Posterior vena cava (tissue), 2 donors: ENCODE measurements at regions of chr20 and their contacts with region 1.

Region 1: DNA sequence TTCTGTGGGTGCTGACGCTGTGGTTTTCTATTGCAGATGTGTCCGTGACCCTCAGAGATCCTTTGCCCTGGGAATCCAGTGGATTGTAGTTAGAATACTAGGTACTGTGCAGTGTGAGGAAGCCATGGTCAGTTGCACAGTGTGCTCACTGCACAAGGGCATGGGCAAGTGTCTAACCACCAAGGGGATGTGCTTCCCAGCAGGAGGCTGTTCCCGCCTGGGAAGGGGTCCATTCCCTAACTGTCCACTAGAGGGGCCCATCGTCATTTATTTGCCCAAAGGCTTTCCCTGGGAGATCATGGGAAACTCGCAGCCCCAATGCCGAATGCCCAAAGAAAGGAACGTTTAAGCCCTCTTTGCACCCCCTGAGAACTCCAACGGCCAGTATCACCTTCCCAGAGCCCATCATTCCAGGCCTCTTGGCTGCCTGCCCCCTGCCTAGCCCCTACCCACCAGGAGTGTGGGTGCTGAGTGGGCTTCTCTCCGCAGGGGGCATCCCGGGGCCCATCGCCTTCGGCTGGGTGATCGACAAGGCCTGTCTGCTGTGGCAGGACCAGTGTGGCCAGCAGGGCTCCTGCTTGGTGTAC is 26.2 kb downstream of the SLCO4A1 start:
- DNase-seq: no peak

Region 2: GRCh38 chr20:62793912-62794724 is 125.6 kb after region 1 on chr20:
- intact Hi-C with region 1: loop called (anchors 5 kb)
- DNase-seq: peak; percentile 99

Region 3: GRCh38 chr20:62808211-62808865 is 139.8 kb after region 1 on chr20:
- intact Hi-C with region 1: loop called (anchors 5 to 10 kb)
- DNase-seq: peak; percentile 92

Region 4: GRCh38 chr20:62818592-62819493 is 150.3 kb after region 1 on chr20:
- intact Hi-C with region 1: loop called in 1 of 2 experiments (anchors 10 kb)
- DNase-seq: no peak

Region 5: GRCh38 chr20:62846188-62846890 is 177.8 kb after region 1 on chr20:
- intact Hi-C with region 1: loop called in 1 of 2 experiments (anchors 5 kb)
- DNase-seq: no peak